ENCODE measurements at regions of chr17 and their contacts with region 1.

Region 1: GRCh38 chr17:79839363-79840268 is at the start of gene CBX4:
- DNase-seq: peak; percentile 74
- H3K4me3 ChIP-seq: peak within 1 kb of the TSS; percentile 80
- H3K27ac ChIP-seq: peak within 1 kb of the TSS; percentile 57
- H3K27me3 ChIP-seq: peaks cover 36% of the 10 kb centered on the region
- CTCF ChIP-seq: peak; percentile 61
- polyA plus RNA-seq, gene CBX4: 6.6 and 7.6 TPM in 2 replicates

Region 2: GRCh38 chr17:79796763-79797491 is 42.7 kb before region 1 on chr17 and contains the start of gene CBX8:
- CTCF ChIA-PET with region 1: interaction called, 10 read pairs
- POLR2A ChIA-PET with region 1: interaction called, 29 read pairs
- DNase-seq: peak; percentile 99
- H3K4me3 ChIP-seq: peak within 1 kb of the TSS; percentile 85
- H3K27ac ChIP-seq: peak within 1 kb of the TSS; percentile 83
- H3K27me3 ChIP-seq: peaks cover 44% of the 10 kb centered on the region
- CTCF ChIP-seq: no peak
- polyA plus RNA-seq, gene CBX8: 0.37 and 1.5 TPM in 2 replicates

Region 3: GRCh38 chr17:79810130-79811010 is 29.2 kb before region 1 on chr17:
- CTCF ChIA-PET with region 1: interaction called, 3 read pairs
- POLR2A ChIA-PET with region 1: interaction called, 26 read pairs
- DNase-seq: no peak
- H3K4me3 ChIP-seq: peak overlapping the region; percentile 27
- H3K27ac ChIP-seq: no peak overlapping the region
- H3K27me3 ChIP-seq: peaks cover 87% of the 10 kb centered on the region
- CTCF ChIP-seq: no peak

Region 4: DNA sequence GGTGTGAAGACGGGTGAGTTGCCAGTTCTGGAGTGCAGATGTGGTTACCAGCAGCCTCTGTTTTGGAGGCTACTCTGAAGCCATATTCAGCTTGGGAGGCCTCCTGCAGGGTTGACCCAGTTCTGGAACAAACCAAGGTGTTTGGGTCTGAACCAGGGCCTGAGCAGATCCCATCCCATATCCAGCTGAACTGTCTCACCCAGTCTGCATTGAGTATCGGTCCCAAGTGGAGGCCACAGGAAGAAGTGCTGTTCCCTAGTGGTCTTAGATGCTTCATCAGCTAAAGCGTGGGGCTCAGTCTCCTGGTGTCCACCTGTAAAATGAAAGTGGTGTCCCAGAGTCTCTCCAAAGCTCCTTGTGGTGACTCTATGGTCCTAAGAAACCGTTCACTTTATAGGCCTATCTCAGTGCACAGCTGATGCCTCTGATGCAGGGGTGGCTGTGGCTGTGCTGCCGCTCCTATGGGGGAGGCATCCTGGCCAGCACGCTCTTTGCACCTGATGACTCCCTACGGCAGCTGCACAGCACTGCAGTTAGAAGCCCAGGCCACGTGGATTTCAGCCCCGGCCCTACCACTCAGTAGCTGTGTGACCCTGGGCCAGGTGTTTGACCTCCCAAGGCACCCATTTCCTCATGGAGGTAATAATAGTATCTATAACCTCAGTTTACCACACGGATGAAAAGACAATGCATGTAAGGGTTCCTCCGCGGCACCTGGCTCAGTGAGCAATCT is 21.4 kb before region 1 on chr17:
- CTCF ChIA-PET with region 1: interaction called, 4 read pairs
- POLR2A ChIA-PET with region 1: interaction called, 26 read pairs
- DNase-seq: no peak
- H3K4me3 ChIP-seq: no peak overlapping the region
- H3K27ac ChIP-seq: no peak overlapping the region
- H3K27me3 ChIP-seq: peaks cover 67% of the 10 kb centered on the region
- CTCF ChIP-seq: no peak

Region 5: GRCh38 chr17:79850571-79851461 is 11.2 kb after region 1 on chr17:
- CTCF ChIA-PET with region 1: interaction called, 13 read pairs
- POLR2A ChIA-PET with region 1: interaction called, 5 read pairs
- DNase-seq: no peak
- H3K4me3 ChIP-seq: no peak overlapping the region
- H3K27ac ChIP-seq: no peak overlapping the region
- H3K27me3 ChIP-seq: peaks cover 9% of the 10 kb centered on the region
- CTCF ChIP-seq: no peak

Region 6: GRCh38 chr17:79981661-79982101 is 142.1 kb after region 1 on chr17:
- CTCF ChIA-PET with region 1: interaction called, 5 read pairs
- POLR2A ChIA-PET with region 1: interaction called, 12 read pairs
- DNase-seq: no peak
- H3K4me3 ChIP-seq: no peak overlapping the region
- H3K27ac ChIP-seq: no peak overlapping the region
- H3K27me3 ChIP-seq: no peaks in the 10 kb centered on the region
- CTCF ChIP-seq: no peak

Measured in AG04450 (cell line).